ENCODE measurements at regions of chr6 and their contacts with region 1.

Region 1: GRCh38 chr6:44630125-44631028 is 242.9 kb downstream of the CDC5L start:
- DNase-seq: peak; percentile 42 to 59
- ATAC-seq: peak; percentile 91 to 95
- H3K4me3 ChIP-seq: no peak overlapping the region
- H3K27ac ChIP-seq: no peak overlapping the region
- H3K4me1 ChIP-seq: no peaks in the 10 kb centered on the region
- CTCF ChIP-seq: peak; percentile 52
- EP300 ChIP-seq: no peak
- POLR2A ChIP-seq: no peak
- RAD21 ChIP-seq: peak; percentile 60 to 64

Region 2: GRCh38 chr6:44618371-44618770 is 12.0 kb before region 1 on chr6:
- CTCF ChIA-PET with region 1: interaction called, 18 read pairs
- POLR2A ChIA-PET with region 1: no interaction called
- DNase-seq: no peak
- ATAC-seq: no peak
- H3K4me3 ChIP-seq: no peak overlapping the region
- H3K27ac ChIP-seq: no peak overlapping the region
- H3K4me1 ChIP-seq: no peaks in the 10 kb centered on the region
- CTCF ChIP-seq: no peak
- EP300 ChIP-seq: no peak
- POLR2A ChIP-seq: no peak
- RAD21 ChIP-seq: no peak

Region 3: DNA sequence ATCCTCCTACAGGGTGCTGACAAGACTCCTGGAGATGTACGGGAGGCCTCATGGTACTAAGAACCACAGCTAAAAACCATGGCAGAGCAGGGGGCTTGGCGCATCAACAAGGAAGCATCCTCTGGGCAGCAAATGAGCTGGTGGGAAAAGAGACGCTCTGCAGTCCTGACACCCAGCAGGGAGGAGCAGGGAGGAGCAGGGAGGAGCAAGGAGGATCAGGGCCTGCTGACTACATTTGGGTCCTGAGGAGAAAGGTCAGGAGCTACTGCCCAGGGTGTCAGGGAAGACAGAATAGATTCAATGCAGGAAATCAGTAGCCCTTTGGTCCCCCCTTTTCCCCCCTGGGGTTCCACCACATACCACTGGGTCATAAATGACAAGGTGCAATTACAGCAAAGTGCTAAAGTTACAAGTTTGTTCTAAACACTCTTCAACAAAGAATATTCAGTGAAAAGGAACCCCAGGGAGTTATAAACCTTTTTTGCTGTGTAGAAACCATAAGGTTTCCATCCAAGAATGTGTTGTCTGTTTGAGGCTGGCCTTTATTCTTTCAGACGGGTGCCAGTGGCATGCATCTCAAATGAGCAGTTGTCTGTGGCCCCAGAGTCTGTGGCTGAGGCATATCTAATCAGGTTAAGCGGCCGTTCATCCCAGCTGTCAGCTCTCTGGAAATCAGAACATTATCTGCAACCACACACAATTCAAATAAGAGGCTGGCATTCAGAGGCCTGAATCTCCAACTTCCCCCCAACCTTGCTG is 82.2 kb after region 1 on chr6:
- CTCF ChIA-PET with region 1: no interaction called
- POLR2A ChIA-PET with region 1: no interaction called
- DNase-seq: no peak
- ATAC-seq: no peak
- H3K4me3 ChIP-seq: no peak overlapping the region
- H3K27ac ChIP-seq: no peak overlapping the region
- H3K4me1 ChIP-seq: no peaks in the 10 kb centered on the region
- CTCF ChIP-seq: no peak
- EP300 ChIP-seq: no peak
- POLR2A ChIP-seq: no peak
- RAD21 ChIP-seq: no peak

Region 4: DNA sequence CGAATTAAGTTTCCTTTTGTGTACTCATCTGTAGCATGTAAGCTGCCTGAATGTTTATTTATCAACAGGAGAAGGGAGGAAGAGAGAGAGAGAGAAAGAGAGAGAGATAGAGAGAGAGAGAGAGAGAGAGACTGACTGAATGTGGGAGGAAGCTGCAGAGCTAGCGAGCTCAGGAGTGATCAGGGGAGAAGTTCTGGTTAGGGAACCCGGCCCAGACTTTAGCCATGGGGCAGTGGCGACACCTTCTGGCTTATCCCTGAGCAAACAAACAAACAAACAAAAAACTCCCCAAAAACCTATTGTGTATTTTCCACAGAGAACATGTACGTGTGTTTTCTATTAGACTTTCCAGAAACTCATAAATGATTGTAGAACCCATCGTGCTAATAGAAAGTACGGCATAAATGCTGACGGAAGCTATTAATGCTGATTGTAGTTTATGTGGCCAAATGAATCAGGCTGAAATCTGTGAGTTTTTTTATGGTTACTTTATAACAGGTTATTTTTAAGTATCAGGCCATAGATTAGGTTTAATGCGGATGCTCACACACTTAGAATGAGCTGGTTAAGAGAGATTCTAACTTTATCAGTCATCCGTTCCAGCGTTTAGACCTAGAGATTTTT is 1292.5 kb after region 1 on chr6:
- CTCF ChIA-PET with region 1: interaction called, 14 read pairs
- POLR2A ChIA-PET with region 1: no interaction called
- DNase-seq: peak; percentile 4 to 33
- ATAC-seq: peak; percentile 63 to 73; a peak in 5 of 6 replicates
- H3K4me3 ChIP-seq: no peak overlapping the region
- H3K27ac ChIP-seq: no peak overlapping the region
- H3K4me1 ChIP-seq: no peaks in the 10 kb centered on the region
- CTCF ChIP-seq: peak; percentile 56
- EP300 ChIP-seq: no peak
- POLR2A ChIP-seq: no peak
- RAD21 ChIP-seq: peak; percentile 75 to 76